ENCODE measurements at regions of chr10 and their contacts with region 1.

Region 1: GRCh38 chr10:87659571-87660483 is at the start of gene PAPSS2:
- DNase-seq: peak; percentile 53
- ATAC-seq: peak; percentile 59
- H3K4me3 ChIP-seq: peak within 1 kb of the TSS; percentile 93
- H3K27ac ChIP-seq: no peak within 1 kb of the TSS
- H3K4me1 ChIP-seq: peaks cover 31% of the 10 kb centered on the region
- H3K27me3 ChIP-seq: no peaks in the 10 kb centered on the region
- CTCF ChIP-seq: no peak
- total RNA-seq, gene PAPSS2: 16.4 and 17.3 TPM in 2 replicates

Region 2: DNA sequence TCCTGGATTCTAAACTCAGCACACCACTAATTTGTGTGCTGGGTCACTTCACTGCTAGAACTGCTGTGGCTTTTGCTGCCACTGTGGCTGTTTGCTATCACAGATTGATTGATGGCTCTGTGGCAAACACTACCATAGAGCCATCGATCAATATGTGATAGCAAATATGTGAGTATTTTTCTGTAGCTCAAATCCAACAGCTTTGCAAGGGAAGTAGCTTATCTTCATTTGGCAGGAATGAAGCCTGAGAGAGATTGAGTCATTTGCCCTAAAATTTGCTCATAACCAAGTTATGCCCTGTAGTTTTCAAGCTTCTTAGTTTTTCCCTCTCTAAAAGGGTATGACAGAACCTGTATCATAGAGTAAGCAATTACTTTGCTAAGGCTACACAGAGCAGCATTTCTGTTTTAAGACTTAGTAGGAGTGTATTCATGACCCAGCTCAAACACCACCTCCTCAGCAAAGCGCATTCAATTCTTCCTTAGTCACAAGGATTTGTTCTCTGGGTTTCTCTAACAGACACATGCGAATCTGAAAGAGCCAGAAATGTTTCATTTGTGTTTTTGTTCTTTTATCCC is 112.0 kb before region 1 on chr10:
- CTCF ChIA-PET with region 1: interaction called, 5 read pairs
- POLR2A ChIA-PET with region 1: no interaction called
- intact Hi-C with region 1: loop called (anchors 2 kb)
- DNase-seq: peak; percentile 87
- ATAC-seq: peak; percentile 89
- H3K4me3 ChIP-seq: peak overlapping the region; percentile 61
- H3K27ac ChIP-seq: peak overlapping the region; percentile 98
- H3K4me1 ChIP-seq: peaks cover 54% of the 10 kb centered on the region
- H3K27me3 ChIP-seq: no peaks in the 10 kb centered on the region
- CTCF ChIP-seq: no peak

Region 3: GRCh38 chr10:87694011-87694794 is 34.4 kb after region 1 on chr10:
- CTCF ChIA-PET with region 1: no interaction called
- POLR2A ChIA-PET with region 1: no interaction called
- intact Hi-C with region 1: loop called (anchors 2 kb)
- DNase-seq: peak; percentile 91
- ATAC-seq: peak; percentile 90
- H3K4me3 ChIP-seq: no peak overlapping the region
- H3K27ac ChIP-seq: peak overlapping the region; percentile 90
- H3K4me1 ChIP-seq: peaks cover 47% of the 10 kb centered on the region
- H3K27me3 ChIP-seq: no peaks in the 10 kb centered on the region
- CTCF ChIP-seq: no peak

Region 4: GRCh38 chr10:87734987-87735827 is 75.4 kb after region 1 on chr10:
- CTCF ChIA-PET with region 1: no interaction called
- POLR2A ChIA-PET with region 1: no interaction called
- intact Hi-C with region 1: loop called (anchors 1 kb)
- DNase-seq: peak; percentile 64
- ATAC-seq: peak; percentile 70
- H3K4me3 ChIP-seq: no peak overlapping the region
- H3K27ac ChIP-seq: no peak overlapping the region
- H3K4me1 ChIP-seq: peaks cover 11% of the 10 kb centered on the region; the same call in 1 of the 2 replicates
- H3K27me3 ChIP-seq: no peaks in the 10 kb centered on the region
- CTCF ChIP-seq: peak; percentile 87